Motor neuron (in vitro differentiated cells): ENCODE measurements at regions of chr20 and their contacts with region 1.

Region 1: GRCh38 chr20:4091490-4092479 is 76.4 kb upstream of the RNF24 start:
- ATAC-seq: peak in 4 of 8 experiments; percentile 39 to 69 (median 61)
- H3K4me3 ChIP-seq: no peak overlapping the region
- H3K27ac ChIP-seq: no peak overlapping the region
- H3K4me1 ChIP-seq: no peaks in the 10 kb centered on the region

Region 2: DNA sequence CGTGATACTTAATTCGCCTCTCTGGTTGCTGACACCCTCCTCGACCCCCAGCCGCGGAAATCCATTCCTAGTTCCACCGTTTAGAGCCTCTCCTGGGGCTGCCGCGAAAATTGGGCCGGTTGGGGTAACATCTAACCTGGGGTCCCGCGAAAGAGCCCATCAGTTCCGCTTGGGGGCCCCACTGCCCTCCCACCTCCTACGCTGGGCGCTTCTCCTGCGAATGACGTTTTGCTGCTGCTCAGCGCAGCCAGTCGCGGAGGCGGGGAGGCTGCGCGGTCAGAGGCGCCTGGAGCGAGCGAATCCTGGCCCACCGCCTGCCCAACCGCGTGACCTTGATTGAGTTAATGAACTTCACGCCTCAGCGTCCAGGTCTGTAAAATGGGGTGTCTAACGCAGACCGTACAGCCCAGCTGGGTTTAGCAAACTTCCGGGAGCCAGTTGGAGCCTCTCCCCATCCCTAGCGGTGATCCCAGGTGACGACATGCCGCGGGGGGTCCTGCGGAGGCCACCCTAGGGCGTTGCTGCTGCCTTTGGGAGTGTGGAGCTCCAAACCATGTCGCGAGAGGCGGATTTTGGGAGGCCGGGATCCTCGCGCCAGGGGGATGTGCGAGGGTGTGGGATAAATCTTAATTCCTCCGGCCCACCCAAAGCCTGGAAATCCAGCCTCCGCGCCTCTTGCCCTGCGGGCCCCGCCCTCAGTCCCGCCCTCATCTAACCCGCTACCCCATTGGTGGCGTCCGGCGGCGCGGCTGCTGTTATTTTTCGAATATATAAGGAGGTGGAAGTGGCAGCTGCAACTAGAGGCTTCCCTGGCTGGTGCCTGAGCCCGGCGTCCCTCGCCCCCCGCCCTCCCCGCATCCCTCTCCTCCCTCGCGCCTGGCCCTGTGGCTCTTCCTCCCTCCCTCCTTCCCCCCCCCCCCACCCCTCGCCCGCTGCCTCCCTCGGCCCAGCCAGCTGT is 296.0 kb before region 1 on chr20 and contains the start of gene CDC25B:
- in situ Hi-C with region 1: loop called in 2 of 9 experiments (anchors 25 kb)
- ATAC-seq: peak; percentile 75 to 88 (median 81)
- H3K4me3 ChIP-seq: peak within 1 kb of the TSS; percentile 40 to 54 (median 45)
- H3K27ac ChIP-seq: peak within 1 kb of the TSS in 1 of 2 donors; percentile 32
- H3K4me1 ChIP-seq: peaks cover 18 to 30% of the 10 kb centered on the region in 2 donors
- total RNA-seq, gene CDC25B: 8.0 to 166 (median 22.8) TPM

Region 3: DNA sequence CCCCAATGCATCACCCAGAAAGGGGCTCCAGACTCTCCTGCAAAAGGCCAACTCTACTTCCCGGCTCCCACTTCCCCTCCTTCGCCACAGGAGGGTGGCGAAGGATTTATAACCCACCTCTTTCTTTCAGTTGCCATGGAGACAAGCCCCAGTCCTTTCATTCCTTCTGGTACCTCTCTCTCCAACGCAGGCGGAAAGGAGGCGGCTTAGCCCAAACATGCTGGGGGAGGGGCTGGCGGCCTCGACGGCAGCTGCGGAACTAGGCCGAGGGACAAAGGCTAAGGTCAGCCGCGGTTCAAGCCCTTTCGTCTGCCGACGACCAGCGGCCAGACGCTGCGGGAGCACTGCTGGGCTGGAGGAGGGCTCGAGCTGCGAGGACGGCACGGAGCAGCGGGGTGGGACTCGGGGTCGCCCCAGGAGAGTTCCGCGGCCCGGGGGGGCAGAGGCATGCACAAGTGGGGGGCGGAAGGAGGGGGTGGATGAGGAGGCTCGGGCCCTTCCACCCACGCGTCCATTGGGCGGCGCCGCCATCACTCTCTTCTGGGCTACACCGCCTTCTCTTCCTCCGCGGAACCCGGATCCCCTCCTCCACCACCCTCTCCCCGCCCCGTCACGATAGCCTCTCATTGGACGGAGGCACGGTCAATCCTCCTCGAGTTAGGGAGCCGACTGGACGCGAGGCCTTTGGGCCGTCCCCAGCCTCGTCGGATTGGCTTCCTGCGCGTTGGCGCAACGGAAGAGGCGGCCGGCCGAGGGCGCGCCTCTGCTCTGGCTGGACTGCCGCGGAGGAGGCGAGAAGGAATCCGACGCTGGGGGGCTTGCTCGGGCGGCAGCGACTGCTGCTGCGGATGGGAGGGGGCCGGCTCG is 202.9 kb before region 1 on chr20 and contains the start of gene PANK2:
- in situ Hi-C with region 1: loop called in 1 of 9 experiments (anchors 25 kb)
- ATAC-seq: peak; percentile 89 to 95 (median 95)
- H3K4me3 ChIP-seq: peak within 1 kb of the TSS; percentile 75 to 91 (median 82)
- H3K27ac ChIP-seq: peak within 1 kb of the TSS; percentile 97 to 99
- H3K4me1 ChIP-seq: peaks cover 11 to 12% of the 10 kb centered on the region in 2 donors
- total RNA-seq, gene PANK2: 16.7 to 48.4 (median 33.5) TPM

Region 4: GRCh38 chr20:3927486-3928291 is 164.1 kb before region 1 on chr20:
- in situ Hi-C with region 1: loop called in 1 of 9 experiments (anchors 25 kb)
- ATAC-seq: peak in 7 of 8 experiments; percentile 14 to 55 (median 37)
- H3K4me3 ChIP-seq: no peak overlapping the region
- H3K27ac ChIP-seq: no peak overlapping the region
- H3K4me1 ChIP-seq: peaks cover 3 to 5% of the 10 kb centered on the region in 2 donors